ENCODE measurements at regions of chr15 and their contacts with region 1.

Region 1: DNA sequence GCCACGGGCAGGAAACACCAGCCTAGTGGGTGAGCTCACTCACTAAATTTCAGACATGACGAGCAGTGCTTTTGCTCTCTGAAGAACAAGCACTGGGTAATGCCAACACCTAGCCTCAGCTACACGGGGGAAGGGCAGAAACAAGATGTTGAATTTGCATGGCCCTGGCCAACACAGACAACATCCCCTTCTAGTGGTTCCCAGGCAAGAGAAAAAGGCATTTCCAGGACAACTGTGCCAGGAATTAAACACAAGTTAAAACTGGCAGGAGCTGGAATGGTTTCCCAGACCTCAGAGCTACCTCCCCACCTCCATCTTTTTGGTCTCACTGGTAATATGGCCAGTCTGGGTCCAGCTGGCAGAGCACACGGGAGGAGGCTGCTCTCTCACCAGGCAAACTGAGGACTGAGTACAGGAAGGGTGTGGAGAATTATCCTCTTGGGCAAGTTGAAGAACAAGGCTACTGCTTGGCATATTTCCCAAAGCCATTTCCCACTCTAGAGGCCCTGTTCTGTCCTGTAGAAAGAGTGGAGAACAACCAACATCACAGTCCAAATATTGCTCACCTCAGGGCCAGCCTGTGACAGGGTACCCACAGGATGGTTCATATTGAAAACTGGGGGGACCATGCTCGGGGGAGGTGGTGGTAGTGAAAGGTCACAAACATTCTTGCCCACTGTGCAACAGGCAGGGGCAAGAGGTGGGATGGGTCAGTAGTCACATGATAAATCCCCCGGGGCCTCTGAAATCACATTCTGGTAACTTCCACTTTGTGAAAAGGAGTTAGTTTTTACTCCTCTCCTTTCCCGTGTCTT is 26.5 kb downstream of the TSPAN3 start:
- DNase-seq: no peak
- ATAC-seq: peak; percentile 60 to 90 (median 68)
- H3K4me3 ChIP-seq: no peak overlapping the region
- H3K27ac ChIP-seq: peak overlapping the region; percentile 81
- H3K4me1 ChIP-seq: peaks cover 32% of the 10 kb centered on the region
- H3K27me3 ChIP-seq: no peaks in the 10 kb centered on the region
- CTCF ChIP-seq: no peak

Region 2: GRCh38 chr15:76894174-76894573 is 150.3 kb before region 1 on chr15:
- intact Hi-C with region 1: no loop called
- DNase-seq: no peak
- ATAC-seq: no peak
- H3K4me3 ChIP-seq: no peak overlapping the region
- H3K27ac ChIP-seq: no peak overlapping the region
- H3K4me1 ChIP-seq: peaks cover 4% of the 10 kb centered on the region
- H3K27me3 ChIP-seq: no peaks in the 10 kb centered on the region
- CTCF ChIP-seq: no peak

Region 3: GRCh38 chr15:77059786-77060361 is 15.4 kb after region 1 on chr15:
- intact Hi-C with region 1: loop called in 1 of 2 experiments (anchors 2 kb)
- DNase-seq: no peak
- ATAC-seq: peak in 1 of 4 donors; percentile 54
- H3K4me3 ChIP-seq: no peak overlapping the region
- H3K27ac ChIP-seq: peak overlapping the region; percentile 84
- H3K4me1 ChIP-seq: peaks cover 92% of the 10 kb centered on the region
- H3K27me3 ChIP-seq: no peaks in the 10 kb centered on the region
- CTCF ChIP-seq: no peak

Region 4: GRCh38 chr15:77083381-77084162 is 39.1 kb after region 1 on chr15:
- intact Hi-C with region 1: loop called in 1 of 2 experiments (anchors 5 kb)
- DNase-seq: peak; percentile 76 to 83
- ATAC-seq: peak; percentile 86 to 92 (median 90)
- H3K4me3 ChIP-seq: peak overlapping the region; percentile 37
- H3K27ac ChIP-seq: peak overlapping the region; percentile 79
- H3K4me1 ChIP-seq: peaks cover 6% of the 10 kb centered on the region
- H3K27me3 ChIP-seq: no peaks in the 10 kb centered on the region
- CTCF ChIP-seq: no peak